ENCODE measurements at regions of chr12 and their contacts with region 1.

Region 1: DNA sequence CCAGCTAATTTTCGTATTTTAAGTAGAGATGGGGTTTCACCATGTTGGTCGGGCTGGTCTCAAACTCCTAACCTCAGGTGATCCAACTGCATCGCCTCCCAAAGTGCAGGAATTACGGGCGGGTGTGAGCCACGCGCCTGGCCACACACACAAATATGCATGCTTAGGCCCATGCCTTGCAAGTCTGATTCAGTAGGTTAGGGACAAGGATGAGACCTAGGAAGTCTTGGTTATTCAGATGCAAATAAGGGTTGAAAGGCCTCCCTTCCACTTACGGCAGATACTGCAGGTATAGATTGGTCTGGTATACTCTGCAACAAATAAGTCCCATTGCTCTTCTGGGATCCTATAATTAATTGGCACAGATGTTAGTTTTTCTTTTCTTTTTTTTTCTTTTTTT is 32.9 kb downstream of the TXNRD1 start:
- H3K4me3 Mint-ChIP-seq: no peak overlapping the region
- H3K27ac Mint-ChIP-seq: peak overlapping the region; percentile 64
- H3K4me1 Mint-ChIP-seq: peaks cover 12% of the 10 kb centered on the region
- H3K27me3 Mint-ChIP-seq: no peaks in the 10 kb centered on the region

Region 2: GRCh38 chr12:103657331-103657730 is 591.1 kb before region 1 on chr12:
- intact Hi-C with region 1: no loop called
- H3K4me3 Mint-ChIP-seq: no peak overlapping the region
- H3K27ac Mint-ChIP-seq: no peak overlapping the region
- H3K4me1 Mint-ChIP-seq: no peaks in the 10 kb centered on the region
- H3K27me3 Mint-ChIP-seq: peaks cover 29% of the 10 kb centered on the region

Region 3: DNA sequence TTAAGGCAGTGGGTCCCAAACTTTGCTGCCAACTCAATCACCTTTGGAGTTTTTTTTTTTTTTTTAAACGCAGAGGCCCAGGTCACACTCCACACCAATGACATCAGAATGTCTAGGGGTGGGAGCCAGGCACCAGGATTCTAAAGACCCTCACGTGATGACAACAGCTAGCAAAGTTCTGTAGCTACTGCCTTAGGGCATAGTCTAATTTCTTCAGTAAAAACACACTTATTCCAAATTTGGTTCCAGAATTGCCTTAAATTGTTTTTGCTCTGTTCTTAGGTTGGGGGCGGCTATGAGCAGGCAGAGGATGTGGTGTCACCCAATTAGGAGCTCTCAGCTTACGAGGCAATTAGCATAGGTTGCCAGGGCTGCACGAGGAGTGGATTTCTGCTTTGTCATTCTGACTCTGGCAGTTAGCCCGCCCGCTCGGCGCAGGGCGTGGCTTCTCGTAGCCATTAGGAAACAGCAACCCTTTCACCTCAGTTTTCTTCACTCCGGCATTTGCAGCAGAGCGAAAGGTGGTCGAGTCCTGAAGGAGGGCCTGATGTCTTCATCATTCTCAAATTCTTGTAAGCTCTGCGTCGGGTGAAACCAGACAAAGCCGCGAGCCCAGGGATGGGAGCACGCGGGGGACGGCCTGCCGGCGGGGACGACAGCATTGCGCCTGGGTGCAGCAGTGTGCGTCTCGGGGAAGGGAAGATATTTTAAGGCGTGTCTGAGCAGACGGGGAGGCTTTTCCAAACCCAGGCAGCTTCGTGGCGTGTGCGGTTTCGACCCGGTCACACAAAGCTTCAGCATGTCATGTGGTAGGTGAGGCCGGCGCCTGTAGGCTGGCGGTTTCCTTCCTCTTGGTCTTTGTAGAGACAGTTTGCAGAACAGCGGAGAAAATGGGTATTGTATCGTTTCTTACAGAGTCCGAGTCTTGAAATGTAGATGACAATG is 38.4 kb after region 1 on chr12:
- intact Hi-C with region 1: loop called (anchors 5 kb)
- H3K4me3 Mint-ChIP-seq: peak overlapping the region; percentile 96
- H3K27ac Mint-ChIP-seq: peak overlapping the region; percentile 95
- H3K4me1 Mint-ChIP-seq: peaks cover 21% of the 10 kb centered on the region
- H3K27me3 Mint-ChIP-seq: no peaks in the 10 kb centered on the region

Measured in dendritic cell treated with granulocyte-macrophage colony-stimulating factor and Interleukin-4, amounts not matched to agents 40 ng/mL and 50 ng/mL, for 4 days (primary cell).